ENCODE measurements at regions of chr6 and their contacts with region 1.

Region 1: GRCh38 chr6:138987640-138988468 is at the start of gene REPS1:
- DNase-seq: peak; percentile 94
- H3K4me3 ChIP-seq: peak within 1 kb of the TSS; percentile 87
- H3K27ac ChIP-seq: peak within 1 kb of the TSS; percentile 67
- H3K4me1 ChIP-seq: peaks cover 33% of the 10 kb centered on the region
- CTCF ChIP-seq: peak; percentile 90
- total RNA-seq, gene REPS1: 29.0 and 40.0 TPM in 2 replicates

Region 2: DNA sequence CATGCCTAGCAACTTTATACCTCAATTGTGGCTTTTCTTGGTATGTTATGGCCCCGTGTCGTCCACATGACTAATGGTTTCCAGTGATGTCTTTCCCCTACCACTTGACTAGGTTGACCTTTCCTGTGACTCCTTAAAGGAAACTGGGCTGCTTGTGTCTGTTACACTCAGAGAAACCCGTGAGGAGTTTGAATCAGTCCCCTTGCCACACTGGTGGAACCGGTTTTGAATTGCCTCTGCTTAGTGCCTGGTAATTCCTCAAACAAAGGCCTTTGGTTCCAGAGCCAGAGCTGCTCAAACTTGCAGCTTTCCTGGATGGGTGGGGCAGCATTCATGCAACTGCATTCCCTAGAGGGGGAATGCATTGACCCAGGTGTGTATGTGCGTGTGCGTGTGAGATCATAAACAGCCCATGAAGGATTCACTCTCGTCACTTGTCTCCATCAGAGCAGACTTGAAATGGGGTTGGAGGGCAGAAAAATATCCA is 170.0 kb before region 1 on chr6:
- CTCF ChIA-PET with region 1: no interaction called
- POLR2A ChIA-PET with region 1: interaction called, 3 read pairs
- intact Hi-C with region 1: loop called (anchors 1 kb)
- DNase-seq: no peak
- H3K4me3 ChIP-seq: no peak overlapping the region
- H3K27ac ChIP-seq: no peak overlapping the region
- H3K4me1 ChIP-seq: peaks cover 15% of the 10 kb centered on the region
- CTCF ChIP-seq: no peak

Region 3: GRCh38 chr6:139109558-139109957 is 121.7 kb after region 1 on chr6:
- CTCF ChIA-PET with region 1: no interaction called
- POLR2A ChIA-PET with region 1: interaction called, 3 read pairs
- intact Hi-C with region 1: loop called (anchors 5 kb)
- DNase-seq: peak; percentile 45
- H3K4me3 ChIP-seq: no peak overlapping the region
- H3K27ac ChIP-seq: no peak overlapping the region
- H3K4me1 ChIP-seq: peaks cover 20% of the 10 kb centered on the region
- CTCF ChIP-seq: peak; percentile 67

Region 4: GRCh38 chr6:139134817-139135581 is 147.1 kb after region 1 on chr6 and contains the start of gene HECA:
- CTCF ChIA-PET with region 1: no interaction called
- POLR2A ChIA-PET with region 1: interaction called, 3 read pairs
- intact Hi-C with region 1: loop called (anchors 5 kb)
- DNase-seq: peak; percentile 95
- H3K4me3 ChIP-seq: peak within 1 kb of the TSS; percentile 87
- H3K27ac ChIP-seq: peak within 1 kb of the TSS; percentile 78
- H3K4me1 ChIP-seq: peaks cover 49% of the 10 kb centered on the region
- CTCF ChIP-seq: no peak
- total RNA-seq, gene HECA: 15.7 and 21.9 TPM in 2 replicates

Region 5: DNA sequence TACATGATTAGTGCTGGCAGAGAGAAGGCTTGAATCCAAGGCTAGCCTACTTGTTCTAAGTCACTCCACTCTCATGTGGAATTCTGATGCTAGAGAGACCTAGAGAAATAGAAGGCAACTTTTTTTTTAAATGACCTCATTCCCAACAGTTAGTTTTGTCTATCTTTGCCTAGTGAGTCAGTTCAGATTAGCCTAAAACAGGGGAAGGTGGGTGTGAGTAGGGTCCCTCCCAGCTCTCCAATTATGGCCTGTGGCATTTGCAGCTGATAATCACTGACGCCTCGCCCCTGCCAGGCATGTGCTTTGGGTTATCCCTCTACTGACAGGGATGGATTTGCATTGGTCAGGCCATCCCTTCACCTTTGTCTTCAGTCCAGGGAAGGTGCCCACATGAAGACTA is 290.3 kb after region 1 on chr6:
- CTCF ChIA-PET with region 1: no interaction called
- POLR2A ChIA-PET with region 1: interaction called, 3 read pairs
- intact Hi-C with region 1: loop called (anchors 5 kb)
- DNase-seq: no peak
- H3K4me3 ChIP-seq: no peak overlapping the region
- H3K27ac ChIP-seq: peak overlapping the region; percentile 89
- H3K4me1 ChIP-seq: peaks cover 89% of the 10 kb centered on the region
- CTCF ChIP-seq: no peak